ENCODE measurements at regions of chr9 and their contacts with region 1.

Region 1: DNA sequence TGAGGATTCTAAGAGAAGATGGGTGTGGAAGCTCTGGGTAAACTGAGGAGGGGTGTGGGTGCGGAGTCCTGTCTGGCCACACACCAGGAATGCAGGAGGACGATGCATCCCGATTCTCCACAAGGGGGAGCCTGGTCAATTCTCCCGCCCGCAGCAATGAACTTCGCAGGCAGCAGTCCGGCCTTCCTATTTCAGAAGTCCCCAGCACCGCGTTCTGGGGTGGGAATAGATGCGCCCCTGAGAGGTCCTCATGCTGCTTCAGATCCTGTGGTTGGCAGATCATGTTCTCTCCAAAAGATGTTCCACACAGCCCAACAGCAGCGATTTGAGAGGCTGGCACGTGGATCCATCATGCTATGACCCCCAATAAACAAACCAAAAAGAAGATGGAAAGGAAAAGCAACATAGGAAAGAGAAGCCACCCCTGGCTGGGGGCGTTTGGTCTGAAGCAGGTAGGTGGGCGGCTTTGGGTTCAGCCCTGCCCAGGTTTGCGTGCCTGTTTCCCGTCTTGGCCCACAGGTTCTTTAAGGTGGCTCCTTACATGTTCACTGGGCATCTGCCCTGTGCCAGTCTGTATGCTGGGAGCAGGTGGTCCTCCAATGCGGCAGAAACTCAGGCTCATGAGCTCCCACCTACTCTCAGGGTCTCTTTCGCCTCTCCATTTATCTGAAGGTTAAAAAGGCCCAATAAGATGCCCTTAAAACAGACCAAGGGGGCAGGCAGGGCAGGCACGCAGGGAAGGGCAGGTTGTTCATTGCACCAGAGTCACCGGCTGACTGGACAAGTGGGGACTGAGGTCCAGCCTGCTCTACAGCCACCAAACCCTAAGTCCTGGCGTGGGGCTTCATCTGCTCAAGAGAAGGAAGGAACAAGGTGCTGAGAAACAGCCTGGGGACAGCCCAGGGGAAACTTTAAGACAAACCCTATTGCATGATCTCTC is 171.6 kb downstream of the PAX5 start:
- DNase-seq: peak; percentile 41
- ATAC-seq: peak; percentile 49
- H3K4me3 ChIP-seq: no peak overlapping the region
- H3K27ac ChIP-seq: no peak overlapping the region
- H3K4me1 ChIP-seq: no peaks in the 10 kb centered on the region
- H3K27me3 ChIP-seq: no peaks in the 10 kb centered on the region; the same call in 1 of the 2 replicates
- CTCF ChIP-seq: peak; percentile 67

Region 2: DNA sequence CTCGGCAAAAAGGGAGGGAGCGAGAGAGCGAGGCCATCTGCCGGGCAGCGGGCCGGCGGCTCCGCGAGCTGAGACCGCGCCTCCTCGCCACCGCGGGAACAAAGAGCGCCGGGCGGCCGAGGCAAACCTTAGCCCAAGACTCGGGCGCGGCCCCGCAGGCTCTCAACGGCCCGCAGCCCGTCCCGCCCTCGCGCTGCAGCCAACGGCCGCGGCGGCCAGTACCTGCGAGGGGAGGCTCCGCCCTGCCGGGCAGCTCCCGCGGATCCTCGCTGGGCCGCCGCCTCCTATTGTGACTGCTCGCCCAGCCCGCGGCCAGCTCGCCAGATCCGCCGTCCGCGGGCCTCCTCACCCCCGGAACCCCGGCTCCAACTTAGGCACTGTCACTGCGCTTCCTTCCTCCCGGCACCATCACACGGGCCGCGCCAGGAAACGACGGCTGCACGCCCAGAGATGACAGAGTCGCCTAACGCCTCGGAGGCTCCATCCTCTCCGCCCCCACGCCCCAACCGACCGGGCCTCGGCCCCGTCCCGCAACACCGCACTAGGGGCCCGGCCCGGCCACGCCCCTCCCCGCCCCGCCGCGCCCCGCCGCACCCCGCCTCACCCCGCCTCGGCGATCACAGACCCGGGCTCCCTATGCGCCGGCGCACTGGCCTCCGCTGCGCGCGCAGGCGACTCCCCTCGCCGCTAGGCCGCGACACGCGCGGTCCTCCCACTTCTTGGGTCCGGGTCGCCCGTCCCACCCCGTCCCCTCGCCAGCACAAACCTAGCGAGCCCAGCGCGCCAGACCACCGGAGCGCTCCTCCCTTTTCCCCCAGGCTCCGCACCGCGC is 461.9 kb before region 1 on chr9:
- CTCF ChIA-PET with region 1: no interaction called
- POLR2A ChIA-PET with region 1: no interaction called
- intact Hi-C with region 1: loop called (anchors 10 kb)
- DNase-seq: peak; percentile 79
- ATAC-seq: peak; percentile 75
- H3K4me3 ChIP-seq: peak overlapping the region; percentile 87
- H3K27ac ChIP-seq: peak overlapping the region; percentile 78
- H3K4me1 ChIP-seq: peaks cover 16% of the 10 kb centered on the region
- H3K27me3 ChIP-seq: no peaks in the 10 kb centered on the region
- CTCF ChIP-seq: no peak